AG04450 (cell line): ENCODE measurements at regions of chrX and their contacts with region 1.

Region 1: GRCh38 chrX:48696301-48697181 is at the start of gene SUV39H1:
- DNase-seq: peak; percentile 56
- H3K4me3 ChIP-seq: peak within 1 kb of the TSS; percentile 69
- H3K27ac ChIP-seq: peak within 1 kb of the TSS; percentile 31
- H3K27me3 ChIP-seq: no peaks in the 10 kb centered on the region
- CTCF ChIP-seq: no peak
- polyA plus RNA-seq, gene SUV39H1: 2.4 and 3.1 TPM in 2 replicates

Region 2: GRCh38 chrX:48580664-48581063 is 115.9 kb before region 1 on chrX:
- CTCF ChIA-PET with region 1: no interaction called
- POLR2A ChIA-PET with region 1: no interaction called
- DNase-seq: no peak
- H3K4me3 ChIP-seq: no peak overlapping the region
- H3K27ac ChIP-seq: no peak overlapping the region
- H3K27me3 ChIP-seq: no peaks in the 10 kb centered on the region
- CTCF ChIP-seq: no peak

Region 3: DNA sequence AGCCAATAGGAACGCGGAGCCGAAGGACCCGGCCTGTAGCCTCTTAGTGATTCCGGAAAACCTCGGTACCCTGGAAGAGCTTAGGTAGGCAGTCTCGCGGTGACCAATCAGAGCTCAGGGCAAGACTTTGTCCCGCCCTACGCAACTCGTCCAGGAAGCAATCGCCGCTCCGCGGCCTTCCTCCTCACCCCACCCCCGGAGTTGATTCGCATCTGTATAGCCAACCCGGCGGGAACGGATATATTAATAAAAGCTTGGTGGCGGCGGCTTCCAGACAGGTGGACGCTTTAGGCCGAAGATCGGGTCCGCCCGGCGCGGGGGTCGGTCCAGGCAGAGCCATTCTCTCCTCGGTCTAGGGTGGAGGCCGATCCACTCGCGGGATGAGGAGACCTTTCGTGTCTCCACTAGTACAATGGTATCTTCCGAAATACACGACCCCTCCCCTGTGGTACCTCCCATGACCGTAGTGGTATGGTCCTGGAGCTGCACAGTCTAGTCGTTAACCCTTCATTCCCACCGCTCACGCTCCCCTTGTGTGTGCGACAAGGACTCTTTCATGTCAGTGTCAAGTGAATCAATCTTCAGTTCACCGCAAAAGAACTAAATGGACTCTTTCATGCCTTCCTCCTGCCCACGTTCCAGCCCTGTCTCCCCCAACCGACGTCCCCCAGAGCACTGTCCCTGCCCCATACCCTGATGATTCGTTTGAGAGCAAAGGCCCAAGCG is 40.8 kb after region 1 on chrX:
- CTCF ChIA-PET with region 1: no interaction called
- POLR2A ChIA-PET with region 1: interaction called, 10 read pairs
- DNase-seq: peak; percentile 93
- H3K4me3 ChIP-seq: peak overlapping the region; percentile 66
- H3K27ac ChIP-seq: peak overlapping the region; percentile 83
- H3K27me3 ChIP-seq: no peaks in the 10 kb centered on the region
- CTCF ChIP-seq: no peak